ENCODE measurements at regions of chr15 and their contacts with region 1.

Region 1: GRCh38 chr15:77543159-77543882 is 89.4 kb downstream of the LINGO1 start:
- DNase-seq: peak; percentile 90
- CTCF ChIP-seq: peak; percentile 85

Region 2: DNA sequence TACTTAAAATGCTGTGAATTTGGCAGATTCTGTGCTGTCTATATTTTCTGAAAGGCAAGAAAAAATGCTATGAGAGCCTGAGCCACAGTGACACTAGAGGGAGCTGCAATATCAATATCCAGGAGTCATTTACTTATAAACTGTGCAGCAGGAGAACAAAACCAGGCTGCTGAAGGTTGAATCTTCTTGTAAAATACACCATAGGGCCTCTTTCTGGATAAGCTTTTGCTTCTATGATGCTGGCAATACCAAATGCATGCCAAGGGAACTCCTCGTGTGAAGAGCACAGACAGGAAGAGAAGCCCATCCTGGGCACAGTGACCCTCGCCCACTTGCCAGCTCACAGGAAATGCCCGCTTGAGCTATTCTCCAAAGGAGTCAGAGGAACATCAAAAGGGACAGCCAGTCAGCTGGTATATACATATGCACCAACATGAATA is 424.4 kb before region 1 on chr15:
- in situ Hi-C with region 1: loop called (anchors 10 kb)
- DNase-seq: peak; percentile 59
- CTCF ChIP-seq: peak; percentile 79

Region 3: DNA sequence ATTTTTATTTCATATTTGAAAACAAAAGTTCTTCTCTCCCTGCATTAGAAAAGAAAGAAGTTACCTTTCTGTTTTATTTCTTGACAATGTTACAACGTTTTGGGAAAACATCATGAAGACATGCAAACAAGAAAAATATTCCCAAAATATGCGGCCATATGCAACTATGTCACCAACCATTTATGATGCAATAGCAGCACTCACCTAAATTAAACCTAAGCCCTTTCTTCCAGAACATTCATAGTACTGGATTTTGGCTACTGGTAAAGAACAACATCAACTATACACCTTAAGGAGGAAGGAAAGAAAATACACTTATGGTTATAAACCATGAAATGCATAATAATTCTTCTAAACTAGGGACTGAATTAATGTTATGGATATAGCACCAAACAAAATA is 287.9 kb before region 1 on chr15:
- in situ Hi-C with region 1: no loop called
- DNase-seq: no peak
- CTCF ChIP-seq: no peak

Region 4: GRCh38 chr15:77819841-77820728 is 276.8 kb after region 1 on chr15:
- in situ Hi-C with region 1: no loop called
- DNase-seq: no peak
- CTCF ChIP-seq: peak; percentile 42